ENCODE measurements at regions of chr6 and their contacts with region 1.

Region 1: DNA sequence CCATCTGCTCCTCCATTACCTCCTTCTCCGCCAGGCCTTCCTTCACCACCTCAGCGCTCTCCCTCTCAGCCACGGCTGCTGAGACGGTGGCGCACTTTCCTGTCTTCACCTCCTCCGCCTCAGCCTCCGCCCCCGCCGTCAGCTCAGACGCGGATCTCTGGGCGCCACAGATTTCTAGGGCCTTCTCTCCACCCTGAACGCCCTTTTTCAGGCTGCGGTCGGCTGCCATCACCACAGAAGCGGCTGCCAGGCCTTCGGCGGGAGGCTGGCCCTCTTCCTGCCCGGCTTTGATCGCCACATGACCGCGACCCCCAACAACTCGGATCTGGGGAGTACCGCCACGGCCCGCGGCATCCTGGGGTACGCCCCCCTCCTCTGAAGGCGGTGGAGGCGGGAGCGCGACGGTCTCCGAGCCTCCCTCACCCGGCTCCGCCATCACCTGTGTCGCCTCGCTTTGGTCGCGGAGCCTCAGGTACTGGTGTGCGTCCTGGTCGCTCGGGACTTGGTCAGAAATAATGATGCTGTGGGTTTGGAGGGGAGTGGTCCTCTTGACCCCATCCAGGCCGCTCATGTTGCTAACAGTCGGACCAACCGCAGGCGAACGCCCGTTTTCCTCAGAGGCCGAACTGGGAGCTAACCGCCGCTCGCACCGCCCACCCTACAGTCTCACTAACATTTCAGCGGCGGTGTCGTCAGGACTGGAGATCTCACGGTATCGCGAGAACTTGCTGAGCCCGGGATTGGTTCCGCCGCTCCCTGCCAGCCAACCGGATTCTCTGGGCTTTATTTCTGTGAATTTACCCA is at the start of gene TSPYL1:
- DNase-seq: peak; percentile 97
- H3K4me3 Mint-ChIP-seq: peak within 1 kb of the TSS; percentile 91
- H3K27ac Mint-ChIP-seq: peak within 1 kb of the TSS; percentile 95
- H3K4me1 Mint-ChIP-seq: peaks cover 50% of the 10 kb centered on the region
- H3K27me3 Mint-ChIP-seq: no peaks in the 10 kb centered on the region
- total RNA-seq, gene TSPYL1: 41.4 to 42.0 TPM

Region 2: GRCh38 chr6:116217069-116217468 is 62.4 kb before region 1 on chr6:
- CTCF ChIA-PET with region 1: interaction called, 4 read pairs
- POLR2A ChIA-PET with region 1: no interaction called
- intact Hi-C with region 1: loop called (anchors 2 kb)
- DNase-seq: no peak
- H3K4me3 Mint-ChIP-seq: no peak overlapping the region
- H3K27ac Mint-ChIP-seq: no peak overlapping the region
- H3K4me1 Mint-ChIP-seq: no peaks in the 10 kb centered on the region
- H3K27me3 Mint-ChIP-seq: no peaks in the 10 kb centered on the region

Region 3: DNA sequence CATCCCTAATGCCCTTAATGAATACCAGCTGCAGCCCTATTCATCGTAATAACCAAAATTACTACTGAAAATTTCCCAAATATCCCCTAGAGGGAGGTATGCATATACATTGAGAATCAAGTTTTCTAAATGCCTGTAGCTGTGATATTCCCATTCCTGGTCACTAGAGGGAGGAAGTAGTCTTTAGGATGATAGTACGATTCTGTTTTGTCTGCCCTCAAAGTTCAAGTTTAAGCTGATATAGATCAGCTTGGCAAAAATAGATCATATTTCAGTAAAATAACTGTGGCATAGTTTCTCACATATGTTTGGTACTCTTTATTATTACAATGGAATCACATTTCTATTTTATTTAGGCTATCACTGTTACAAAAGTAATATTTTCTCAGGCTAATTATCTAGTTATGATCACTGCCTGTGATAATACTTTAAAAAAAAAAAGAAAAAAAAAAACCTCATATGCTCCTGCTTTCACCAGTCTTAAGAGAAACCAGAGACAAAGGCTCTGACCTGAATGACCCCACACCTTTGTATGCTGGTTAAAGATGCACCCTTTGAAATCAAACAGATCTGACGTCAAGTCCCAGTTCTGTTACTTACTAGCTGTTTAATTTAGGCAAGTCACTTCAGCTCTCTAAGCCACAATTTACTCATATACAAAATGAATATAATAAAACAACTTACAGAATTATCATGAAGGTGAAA is 10.7 kb before region 1 on chr6:
- CTCF ChIA-PET with region 1: interaction called, 30 read pairs
- POLR2A ChIA-PET with region 1: interaction called, 14 read pairs
- intact Hi-C with region 1: loop called (anchors 1 kb)
- DNase-seq: no peak
- H3K4me3 Mint-ChIP-seq: no peak overlapping the region
- H3K27ac Mint-ChIP-seq: peak overlapping the region; percentile 4
- H3K4me1 Mint-ChIP-seq: peaks cover 23% of the 10 kb centered on the region
- H3K27me3 Mint-ChIP-seq: no peaks in the 10 kb centered on the region

Region 4: DNA sequence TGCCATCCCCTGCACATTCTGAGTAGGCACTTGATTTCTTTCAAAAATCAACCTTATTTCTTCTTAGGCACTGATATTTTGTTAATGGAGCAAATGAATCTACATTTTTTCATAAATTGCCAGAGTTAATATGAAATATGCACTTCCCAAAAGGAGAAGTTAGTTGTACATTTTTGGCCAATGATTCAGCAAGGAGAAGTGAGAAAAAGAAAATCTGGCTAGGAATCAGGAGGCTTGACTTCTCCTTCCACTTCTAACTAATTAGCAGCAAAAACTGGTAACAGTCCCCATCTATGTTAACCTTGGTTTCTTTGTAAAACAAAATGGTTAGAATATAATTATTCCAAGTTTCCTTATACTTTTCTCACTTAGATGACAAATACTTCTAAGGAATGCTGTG is 84.3 kb after region 1 on chr6:
- CTCF ChIA-PET with region 1: no interaction called
- POLR2A ChIA-PET with region 1: no interaction called
- intact Hi-C with region 1: no loop called
- DNase-seq: no peak
- H3K4me3 Mint-ChIP-seq: no peak overlapping the region
- H3K27ac Mint-ChIP-seq: no peak overlapping the region
- H3K4me1 Mint-ChIP-seq: peaks cover 6% of the 10 kb centered on the region
- H3K27me3 Mint-ChIP-seq: peaks cover 2% of the 10 kb centered on the region

Region 5: DNA sequence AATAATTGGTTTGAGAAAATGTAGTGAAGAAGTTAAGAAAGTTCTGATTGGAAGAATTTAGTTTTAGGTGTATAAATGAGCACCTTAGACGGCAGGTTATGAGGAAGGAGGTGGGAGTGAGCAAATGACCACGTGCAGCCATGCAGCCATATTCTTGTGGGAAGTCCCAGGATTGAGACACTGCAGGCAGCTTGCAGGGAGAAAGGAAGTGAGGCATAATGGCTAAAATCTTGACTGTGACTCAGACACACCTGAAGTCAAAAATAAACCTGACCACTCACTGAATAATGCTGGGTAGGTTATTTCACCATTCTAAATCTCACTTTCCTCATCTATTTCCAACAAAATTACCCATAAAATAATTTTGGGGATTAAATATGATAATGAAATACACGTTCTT is 107.9 kb after region 1 on chr6:
- CTCF ChIA-PET with region 1: no interaction called
- POLR2A ChIA-PET with region 1: no interaction called
- intact Hi-C with region 1: loop called (anchors 5 kb)
- DNase-seq: peak; percentile 38
- H3K4me3 Mint-ChIP-seq: no peak overlapping the region
- H3K27ac Mint-ChIP-seq: no peak overlapping the region
- H3K4me1 Mint-ChIP-seq: peaks cover 38% of the 10 kb centered on the region
- H3K27me3 Mint-ChIP-seq: no peaks in the 10 kb centered on the region

Region 6: GRCh38 chr6:116667623-116668022 is 388.2 kb after region 1 on chr6:
- CTCF ChIA-PET with region 1: no interaction called
- POLR2A ChIA-PET with region 1: interaction called, 4 read pairs
- intact Hi-C with region 1: loop called (anchors 1 kb)
- DNase-seq: no peak
- H3K4me3 Mint-ChIP-seq: peak overlapping the region; percentile 98
- H3K27ac Mint-ChIP-seq: peak overlapping the region; percentile 95
- H3K4me1 Mint-ChIP-seq: peaks cover 35% of the 10 kb centered on the region
- H3K27me3 Mint-ChIP-seq: peaks cover 3% of the 10 kb centered on the region

Measured in activated CD4-positive, alpha-beta memory T cell treated with anti-CD3 and anti-CD28 coated beads for 36 hours (primary cell).